IMR-90 (cell line): ENCODE measurements at regions of chr1 and their contacts with region 1.

Region 1: DNA sequence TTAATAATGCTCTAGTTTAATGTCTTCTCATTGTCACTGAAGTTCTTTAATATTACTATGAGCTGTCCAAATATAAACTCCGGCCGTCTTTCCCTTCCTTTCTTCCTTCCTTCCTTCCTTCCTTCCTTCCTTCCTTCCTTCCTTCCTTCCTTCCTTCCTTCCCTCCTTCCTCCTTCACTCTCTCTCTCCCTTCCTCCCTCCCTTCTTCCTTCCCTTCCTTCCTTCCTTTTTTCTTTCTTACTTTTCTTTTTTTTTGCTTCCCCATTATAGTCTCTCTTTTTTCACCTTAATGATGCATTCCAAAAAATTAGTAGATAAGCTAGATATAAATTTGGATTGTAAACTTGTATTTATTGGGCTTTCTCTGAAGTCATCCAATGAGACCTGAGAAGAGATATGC is 431.0 kb upstream of the ADGRL4 start:
- DNase-seq: no peak
- ATAC-seq: no peak
- H3K4me3 ChIP-seq: no peak overlapping the region
- H3K27ac ChIP-seq: no peak overlapping the region
- H3K4me1 ChIP-seq: no peaks in the 10 kb centered on the region
- H3K27me3 ChIP-seq: no peaks in the 10 kb centered on the region
- CTCF ChIP-seq: no peak
- POLR2A ChIP-seq: no peak
- RAD21 ChIP-seq: no peak

Region 2: GRCh38 chr1:79150576-79150975 is 287.0 kb before region 1 on chr1:
- CTCF ChIA-PET with region 1: no interaction called
- POLR2A ChIA-PET with region 1: no interaction called
- dilution Hi-C with region 1: no loop called
- in situ Hi-C with region 1: no loop called
- intact Hi-C with region 1: loop called (anchors 5 kb)
- DNase-seq: no peak
- ATAC-seq: no peak
- H3K4me3 ChIP-seq: no peak overlapping the region
- H3K27ac ChIP-seq: no peak overlapping the region
- H3K4me1 ChIP-seq: peaks cover 6% of the 10 kb centered on the region
- H3K27me3 ChIP-seq: no peaks in the 10 kb centered on the region
- CTCF ChIP-seq: no peak
- POLR2A ChIP-seq: no peak
- RAD21 ChIP-seq: no peak

Region 3: GRCh38 chr1:79568412-79568811 is 130.9 kb after region 1 on chr1:
- CTCF ChIA-PET with region 1: no interaction called
- POLR2A ChIA-PET with region 1: no interaction called
- dilution Hi-C with region 1: no loop called
- in situ Hi-C with region 1: no loop called
- intact Hi-C with region 1: no loop called
- DNase-seq: peak; percentile 51
- ATAC-seq: peak; percentile 57
- H3K4me3 ChIP-seq: no peak overlapping the region
- H3K27ac ChIP-seq: no peak overlapping the region
- H3K4me1 ChIP-seq: no peaks in the 10 kb centered on the region
- H3K27me3 ChIP-seq: no peaks in the 10 kb centered on the region
- CTCF ChIP-seq: no peak
- POLR2A ChIP-seq: no peak
- RAD21 ChIP-seq: no peak